Calu3 (cell line): ENCODE measurements at regions of chr1 and their contacts with region 1.

Region 1: GRCh38 chr1:41955461-41956159 is 36.9 kb upstream of the HIVEP3 start:
- DNase-seq: peak; percentile 68
- H3K4me3 Mint-ChIP-seq: peak overlapping the region; percentile 56
- H3K27ac Mint-ChIP-seq: peak overlapping the region; percentile 85
- H3K4me1 Mint-ChIP-seq: peaks cover 89% of the 10 kb centered on the region
- H3K27me3 Mint-ChIP-seq: no peaks in the 10 kb centered on the region
- CTCF ChIP-seq: no peak

Region 2: GRCh38 chr1:41919764-41920397 is 35.7 kb before region 1 on chr1:
- CTCF ChIA-PET with region 1: interaction called, 10 read pairs
- intact Hi-C with region 1: no loop called
- DNase-seq: peak; percentile 83
- H3K4me3 Mint-ChIP-seq: peak overlapping the region; percentile 80
- H3K27ac Mint-ChIP-seq: peak overlapping the region; percentile 58
- H3K4me1 Mint-ChIP-seq: peaks cover 54% of the 10 kb centered on the region
- H3K27me3 Mint-ChIP-seq: no peaks in the 10 kb centered on the region
- CTCF ChIP-seq: no peak

Region 3: GRCh38 chr1:42005530-42005929 is 49.9 kb after region 1 on chr1:
- CTCF ChIA-PET with region 1: no interaction called
- intact Hi-C with region 1: loop called (anchors 2 kb)
- DNase-seq: no peak
- H3K4me3 Mint-ChIP-seq: no peak overlapping the region
- H3K27ac Mint-ChIP-seq: no peak overlapping the region
- H3K4me1 Mint-ChIP-seq: peaks cover 22% of the 10 kb centered on the region
- H3K27me3 Mint-ChIP-seq: no peaks in the 10 kb centered on the region
- CTCF ChIP-seq: no peak